Activated naive CD4-positive, alpha-beta T cell treated with anti-CD3 and anti-CD28 coated beads for 36 hours (primary cell): ENCODE measurements at regions of chr4 and their contacts with region 1.

Region 1: GRCh38 chr4:169612871-169613859 is 782 bp upstream of the NEK1 start:
- DNase-seq: peak; percentile 81
- H3K4me3 Mint-ChIP-seq: peak overlapping the region; percentile 87
- H3K27ac Mint-ChIP-seq: peak overlapping the region; percentile 92
- H3K4me1 Mint-ChIP-seq: peaks cover 42% of the 10 kb centered on the region
- H3K27me3 Mint-ChIP-seq: no peaks in the 10 kb centered on the region

Region 2: GRCh38 chr4:169398316-169398715 is 214.8 kb before region 1 on chr4:
- CTCF ChIA-PET with region 1: no interaction called
- intact Hi-C with region 1: no loop called
- DNase-seq: no peak
- H3K4me3 Mint-ChIP-seq: no peak overlapping the region
- H3K27ac Mint-ChIP-seq: no peak overlapping the region
- H3K4me1 Mint-ChIP-seq: no peaks in the 10 kb centered on the region
- H3K27me3 Mint-ChIP-seq: no peaks in the 10 kb centered on the region

Region 3: DNA sequence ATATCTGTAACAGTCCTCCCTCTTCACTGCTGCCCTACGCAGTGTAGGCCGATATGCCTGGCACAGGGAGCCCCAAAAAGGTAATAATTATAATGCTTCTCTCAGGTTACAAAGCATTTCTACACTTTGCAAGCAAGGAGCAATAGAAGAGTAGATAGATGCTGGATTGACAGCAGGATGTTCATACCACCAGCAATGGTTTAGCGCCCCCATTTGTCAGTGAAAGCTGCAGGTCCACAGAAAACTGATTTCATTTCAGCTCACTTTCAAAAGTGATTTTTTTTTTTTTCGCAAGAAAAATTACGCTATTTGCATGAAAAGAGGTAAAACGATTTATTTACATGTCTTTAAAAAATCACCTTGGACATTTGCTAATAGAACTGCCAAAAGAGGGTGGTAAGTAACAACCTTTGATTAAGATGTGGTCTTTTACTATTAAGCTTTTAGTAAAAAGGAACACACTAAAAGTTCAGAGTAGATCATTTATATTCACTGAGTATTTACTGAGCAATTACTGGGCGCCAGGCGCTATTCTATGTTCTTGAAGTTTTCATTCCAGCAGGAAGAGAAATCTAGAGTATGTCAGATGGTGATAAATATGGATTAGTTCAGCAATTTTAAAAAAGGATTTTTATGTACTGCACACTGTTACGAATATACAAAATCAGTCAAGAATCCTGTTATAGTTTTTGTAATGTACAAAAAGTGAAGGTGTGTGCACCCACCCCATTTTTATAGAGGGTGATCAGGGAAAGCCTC is 110.2 kb after region 1 on chr4:
- CTCF ChIA-PET with region 1: no interaction called
- intact Hi-C with region 1: loop called (anchors 1 kb)
- DNase-seq: peak; percentile 37
- H3K4me3 Mint-ChIP-seq: no peak overlapping the region
- H3K27ac Mint-ChIP-seq: no peak overlapping the region
- H3K4me1 Mint-ChIP-seq: peaks cover 10% of the 10 kb centered on the region
- H3K27me3 Mint-ChIP-seq: no peaks in the 10 kb centered on the region

Region 4: GRCh38 chr4:169791527-169792156 is 178.5 kb after region 1 on chr4:
- CTCF ChIA-PET with region 1: no interaction called
- intact Hi-C with region 1: loop called (anchors 1 kb)
- DNase-seq: peak; percentile 49
- H3K4me3 Mint-ChIP-seq: peak overlapping the region; percentile 47
- H3K27ac Mint-ChIP-seq: no peak overlapping the region
- H3K4me1 Mint-ChIP-seq: peaks cover 12% of the 10 kb centered on the region
- H3K27me3 Mint-ChIP-seq: peaks cover 43% of the 10 kb centered on the region

Region 5: DNA sequence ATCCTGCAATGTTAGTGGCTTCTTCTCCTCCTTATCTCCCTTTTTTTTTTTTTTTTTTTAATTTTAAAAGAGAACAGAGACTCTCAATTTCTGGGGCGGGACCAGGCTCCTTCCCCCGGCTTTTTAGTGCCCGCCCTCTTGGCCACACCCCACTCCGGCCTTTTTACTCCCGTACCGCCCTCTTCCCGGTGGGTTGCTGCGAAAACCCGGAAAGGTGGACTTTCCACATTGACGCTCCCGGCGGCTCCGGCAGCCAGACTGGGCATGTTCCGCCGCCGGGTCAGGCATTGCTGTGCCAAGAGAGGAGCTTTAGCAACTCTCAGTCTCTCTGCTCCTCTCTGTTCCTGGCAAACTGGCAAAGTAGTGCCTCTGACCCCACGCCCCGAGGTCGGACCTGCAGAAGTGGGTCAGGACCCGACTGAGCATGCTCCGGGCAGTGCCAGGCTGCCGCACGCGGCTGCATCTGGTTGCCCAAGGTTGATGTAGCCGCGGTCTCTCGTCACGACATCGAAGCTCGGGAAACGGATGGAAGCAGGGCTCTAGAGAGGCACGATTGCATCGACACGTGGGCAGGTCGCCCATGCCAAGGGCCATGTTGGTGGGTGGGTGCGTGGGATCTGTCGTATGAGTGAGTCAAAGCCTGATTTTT is 414.1 kb after region 1 on chr4:
- CTCF ChIA-PET with region 1: no interaction called
- intact Hi-C with region 1: loop called (anchors 1 kb)
- DNase-seq: peak; percentile 93
- H3K4me3 Mint-ChIP-seq: peak overlapping the region; percentile 83
- H3K27ac Mint-ChIP-seq: peak overlapping the region; percentile 38
- H3K4me1 Mint-ChIP-seq: peaks cover 7% of the 10 kb centered on the region
- H3K27me3 Mint-ChIP-seq: peaks cover 15% of the 10 kb centered on the region

Region 6: DNA sequence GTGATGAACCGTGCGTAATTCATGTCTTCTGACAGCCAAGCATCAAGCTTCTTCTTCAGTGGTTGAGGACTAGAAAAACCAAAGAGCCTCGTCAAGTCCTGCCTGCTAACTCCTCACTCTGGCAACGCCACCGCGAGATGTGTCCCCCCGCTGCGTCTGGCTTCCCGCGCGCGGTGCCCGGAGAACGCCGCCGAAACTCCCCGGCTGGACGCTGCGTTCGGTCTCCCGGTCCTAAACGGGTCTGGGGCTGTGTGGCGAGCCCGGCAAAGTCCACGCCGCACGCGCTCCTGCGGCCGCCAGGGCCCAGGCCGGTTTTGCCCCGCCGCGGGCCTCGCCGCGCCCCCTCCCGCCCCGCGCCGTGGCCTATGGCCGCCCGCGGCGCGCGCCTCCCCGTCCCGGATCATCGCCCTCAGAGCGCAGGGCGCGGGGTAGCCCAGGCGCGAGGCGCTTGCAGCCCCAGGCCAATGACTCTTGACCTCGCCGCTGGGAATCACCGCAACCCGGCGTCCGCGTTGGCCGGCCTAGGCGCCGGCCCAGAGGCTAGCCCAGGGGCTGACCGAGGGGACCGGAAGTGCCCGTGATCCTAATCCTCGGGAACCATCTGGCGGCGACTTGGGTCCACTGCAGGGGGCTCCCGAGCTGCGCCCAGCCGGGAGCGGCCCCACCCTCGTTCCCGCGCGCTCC is 476.6 kb after region 1 on chr4 and contains the start of gene AADAT:
- CTCF ChIA-PET with region 1: no interaction called
- intact Hi-C with region 1: loop called (anchors 2 kb)
- DNase-seq: peak; percentile 27
- H3K4me3 Mint-ChIP-seq: peak within 1 kb of the TSS; percentile 61
- H3K27ac Mint-ChIP-seq: no peak within 1 kb of the TSS
- H3K4me1 Mint-ChIP-seq: peaks cover 13% of the 10 kb centered on the region
- H3K27me3 Mint-ChIP-seq: peaks cover 47% of the 10 kb centered on the region
- total RNA-seq, gene AADAT: not detected